ENCODE measurements at regions of chr12 and their contacts with region 1.

Region 1: GRCh38 chr12:121145221-121145620 is 12.5 kb downstream of the P2RX7 start:
- DNase-seq: no peak
- ATAC-seq: peak; percentile 65

Region 2: GRCh38 chr12:121175383-121176227 is 30.4 kb after region 1 on chr12:
- intact Hi-C with region 1: no loop called
- DNase-seq: no peak
- ATAC-seq: peak; percentile 73

Region 3: GRCh38 chr12:121202407-121203370 is 57.5 kb after region 1 on chr12:
- intact Hi-C with region 1: loop called (anchors 5 kb)
- DNase-seq: no peak
- ATAC-seq: no peak

Measured in sciatic nerve (tissue), 2 donors.